ENCODE measurements at regions of chr20 and their contacts with region 1.

Region 1: GRCh38 chr20:35146920-35147574 is at the start of gene EDEM2:
- DNase-seq: peak; percentile 93
- H3K4me3 Mint-ChIP-seq: peak within 1 kb of the TSS; percentile 93
- H3K27ac Mint-ChIP-seq: peak within 1 kb of the TSS; percentile 94
- H3K4me1 Mint-ChIP-seq: peaks cover 41% of the 10 kb centered on the region
- H3K27me3 Mint-ChIP-seq: peaks cover 9% of the 10 kb centered on the region
- total RNA-seq, gene EDEM2: 19.9 and 21.9 TPM in 2 replicates

Region 2: DNA sequence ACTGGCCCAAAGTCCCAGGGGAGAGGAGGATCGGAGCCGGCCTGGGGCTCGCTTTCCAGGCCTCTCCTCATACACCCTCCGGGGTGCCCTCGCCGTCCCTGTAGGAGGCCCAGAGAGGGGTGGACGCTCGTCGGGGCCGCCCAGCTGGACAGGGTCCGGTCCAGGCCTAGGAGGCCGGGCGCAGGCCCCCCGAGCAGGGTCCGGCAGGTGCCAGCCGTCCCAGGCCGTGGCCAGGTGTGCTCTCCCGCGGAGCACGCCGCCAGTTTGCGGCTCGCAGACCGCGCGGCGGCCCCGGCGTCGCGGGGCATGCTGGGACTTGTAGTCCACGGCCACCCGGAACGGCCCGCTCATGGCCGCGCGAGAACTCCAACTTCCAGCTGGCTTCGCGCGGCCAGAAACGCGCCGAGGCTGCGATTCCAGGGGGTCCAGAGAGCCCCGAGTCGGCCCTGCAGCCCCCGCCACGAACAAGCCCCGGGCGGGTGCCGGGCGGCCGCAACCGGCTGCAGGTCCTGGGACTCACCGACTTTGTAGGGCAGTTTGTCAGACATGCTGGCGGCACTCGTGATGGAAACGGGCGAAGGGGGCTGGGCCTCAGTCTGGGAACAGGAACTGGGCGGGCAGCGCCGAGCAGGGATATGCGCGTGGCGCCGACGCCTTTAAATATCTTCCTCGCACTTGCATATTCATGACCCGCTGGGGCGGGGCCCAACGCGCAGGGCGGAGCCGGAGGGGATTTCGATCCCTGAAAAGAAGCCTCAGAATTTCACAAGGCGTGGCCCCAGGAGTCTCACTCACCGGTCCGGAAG is 844.1 kb before region 1 on chr20 and contains the start of gene AHCY:
- intact Hi-C with region 1: loop called (anchors 10 kb)
- DNase-seq: peak; percentile 93
- H3K4me3 Mint-ChIP-seq: peak within 1 kb of the TSS; percentile 83
- H3K27ac Mint-ChIP-seq: peak within 1 kb of the TSS; percentile 92
- H3K4me1 Mint-ChIP-seq: peaks cover 19% of the 10 kb centered on the region
- H3K27me3 Mint-ChIP-seq: no peaks in the 10 kb centered on the region
- total RNA-seq, gene AHCY: 130 and 132 TPM in 2 replicates

Region 3: GRCh38 chr20:34955232-34956040 is 191.6 kb before region 1 on chr20 and contains the starts of genes GSS and MYH7B:
- intact Hi-C with region 1: loop called (anchors 1 kb)
- DNase-seq: peak; percentile 97
- H3K4me3 Mint-ChIP-seq: peak within 1 kb of the TSS; percentile 94
- H3K27ac Mint-ChIP-seq: peak within 1 kb of the TSS; percentile 95
- H3K4me1 Mint-ChIP-seq: peaks cover 24% of the 10 kb centered on the region
- H3K27me3 Mint-ChIP-seq: peaks cover 3% of the 10 kb centered on the region
- total RNA-seq, gene GSS: 64.1 and 68.0 TPM in 2 replicates
- total RNA-seq, gene MYH7B: 0.20 and 0.44 TPM in 2 replicates

Region 4: GRCh38 chr20:35120012-35120701 is 26.9 kb before region 1 on chr20:
- intact Hi-C with region 1: no loop called
- DNase-seq: no peak
- H3K4me3 Mint-ChIP-seq: no peak overlapping the region
- H3K27ac Mint-ChIP-seq: no peak overlapping the region
- H3K4me1 Mint-ChIP-seq: peaks cover 7% of the 10 kb centered on the region
- H3K27me3 Mint-ChIP-seq: no peaks in the 10 kb centered on the region

Region 5: GRCh38 chr20:35269055-35269781 is 122.2 kb after region 1 on chr20:
- intact Hi-C with region 1: loop called (anchors 1 kb)
- DNase-seq: peak; percentile 36
- H3K4me3 Mint-ChIP-seq: no peak overlapping the region
- H3K27ac Mint-ChIP-seq: no peak overlapping the region
- H3K4me1 Mint-ChIP-seq: no peaks in the 10 kb centered on the region
- H3K27me3 Mint-ChIP-seq: no peaks in the 10 kb centered on the region

Region 6: GRCh38 chr20:35284267-35284991 is 137.4 kb after region 1 on chr20 and contains the start of gene EIF6:
- intact Hi-C with region 1: loop called (anchors 1 kb)
- DNase-seq: peak; percentile 73
- H3K4me3 Mint-ChIP-seq: peak within 1 kb of the TSS; percentile 93
- H3K27ac Mint-ChIP-seq: peak within 1 kb of the TSS; percentile 95
- H3K4me1 Mint-ChIP-seq: peaks cover 28% of the 10 kb centered on the region
- H3K27me3 Mint-ChIP-seq: peaks cover 2% of the 10 kb centered on the region
- total RNA-seq, gene EIF6: 232 TPM in 2 replicates

Region 7: DNA sequence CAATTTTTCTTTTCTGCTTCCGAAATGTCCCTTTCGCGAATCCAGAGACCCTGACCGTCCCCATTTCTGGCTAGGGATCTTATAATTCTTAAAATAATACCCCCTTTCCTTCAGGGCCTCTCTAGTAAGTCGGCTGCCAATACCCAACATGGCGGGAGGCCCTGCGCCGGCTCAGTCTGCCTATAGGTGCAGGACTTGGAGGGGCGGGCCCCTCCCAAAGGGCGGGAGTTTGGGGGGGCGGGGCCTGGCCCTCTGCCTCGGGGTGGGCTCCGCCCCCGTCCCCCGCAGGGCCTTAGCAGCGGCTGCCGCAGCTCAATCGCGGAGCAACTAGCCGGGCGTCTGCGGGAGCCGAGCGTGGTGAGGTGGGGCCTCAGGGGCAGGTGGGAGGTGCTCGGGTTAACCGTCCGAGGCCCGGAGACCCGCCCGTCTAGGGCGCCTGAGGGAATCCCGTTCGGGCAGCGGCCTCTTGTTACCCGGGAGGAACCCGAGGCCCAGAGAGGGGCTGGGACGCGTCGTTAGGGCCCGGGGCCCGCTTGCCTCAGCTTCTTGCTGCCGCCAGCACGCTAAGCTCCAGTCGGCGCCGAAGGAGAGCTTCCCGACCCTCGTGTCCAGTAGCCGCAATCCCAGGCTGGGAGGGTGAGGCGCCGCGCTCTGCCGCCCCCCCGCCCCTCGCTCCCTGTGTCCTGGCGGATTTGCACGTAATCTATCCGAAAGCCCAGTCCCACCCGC is 308.0 kb after region 1 on chr20 and contains the start of gene CEP250:
- intact Hi-C with region 1: loop called (anchors 2 kb)
- DNase-seq: peak; percentile 88
- H3K4me3 Mint-ChIP-seq: peak within 1 kb of the TSS; percentile 93
- H3K27ac Mint-ChIP-seq: peak within 1 kb of the TSS; percentile 99
- H3K4me1 Mint-ChIP-seq: peaks cover 22% of the 10 kb centered on the region
- H3K27me3 Mint-ChIP-seq: no peaks in the 10 kb centered on the region
- total RNA-seq, gene CEP250: 44.4 and 45.6 TPM in 2 replicates

Measured in activated T-helper 1 cell treated with anti-CD3 and anti-CD28 coated beads, Interleukin-12 subunit alpha, Interleukin-12 subunit beta, Interleukin-2, Interleukin-4 antibody, amounts not matched to agents 30 ng/mL and 10 ng/mL and 1 ng/mL, durations not matched to agents 14 hours and 24 hours and 36 hours (primary cell).